PC-9 (cell line): ENCODE measurements at regions of chr5 and their contacts with region 1.

Region 1: DNA sequence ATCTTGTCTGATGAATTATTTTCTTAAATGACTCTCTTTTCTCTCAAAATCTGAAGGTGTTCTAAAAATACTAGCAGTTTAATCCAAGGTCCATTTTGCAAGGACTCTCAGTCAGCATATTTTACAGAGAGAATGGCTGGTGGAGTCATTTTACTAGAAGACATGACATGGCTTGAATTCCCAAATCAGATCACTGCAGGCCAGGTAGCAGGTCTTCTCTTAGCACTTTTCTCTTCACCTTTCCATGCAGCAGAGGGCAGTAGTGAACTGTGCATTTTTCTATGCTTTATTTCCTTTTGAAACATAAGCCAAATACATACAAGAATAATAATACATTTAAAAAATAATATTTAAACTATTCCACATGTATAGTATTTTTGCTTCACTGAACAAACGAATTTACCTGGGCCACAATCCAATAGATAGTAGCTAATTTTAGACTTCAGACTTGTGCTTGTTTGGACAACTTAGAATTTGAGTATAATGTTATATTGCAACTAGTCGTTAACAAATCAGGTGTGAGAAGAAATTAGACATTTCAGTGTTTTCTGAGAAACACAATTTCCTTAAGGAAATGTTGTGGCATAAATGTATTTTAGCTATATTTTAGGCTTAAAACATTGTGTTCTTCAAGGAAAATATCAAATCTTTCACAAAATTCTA is 289.4 kb upstream of the DAB2 start:
- DNase-seq: peak; percentile 63 to 74
- H3K4me3 ChIP-seq: no peak overlapping the region
- H3K27ac ChIP-seq: peak overlapping the region; percentile 60
- H3K4me1 ChIP-seq: peaks cover 8% of the 10 kb centered on the region; the same call in 1 of the 2 replicates
- H3K27me3 ChIP-seq: no peaks in the 10 kb centered on the region
- CTCF ChIP-seq: peak; percentile 87

Region 2: DNA sequence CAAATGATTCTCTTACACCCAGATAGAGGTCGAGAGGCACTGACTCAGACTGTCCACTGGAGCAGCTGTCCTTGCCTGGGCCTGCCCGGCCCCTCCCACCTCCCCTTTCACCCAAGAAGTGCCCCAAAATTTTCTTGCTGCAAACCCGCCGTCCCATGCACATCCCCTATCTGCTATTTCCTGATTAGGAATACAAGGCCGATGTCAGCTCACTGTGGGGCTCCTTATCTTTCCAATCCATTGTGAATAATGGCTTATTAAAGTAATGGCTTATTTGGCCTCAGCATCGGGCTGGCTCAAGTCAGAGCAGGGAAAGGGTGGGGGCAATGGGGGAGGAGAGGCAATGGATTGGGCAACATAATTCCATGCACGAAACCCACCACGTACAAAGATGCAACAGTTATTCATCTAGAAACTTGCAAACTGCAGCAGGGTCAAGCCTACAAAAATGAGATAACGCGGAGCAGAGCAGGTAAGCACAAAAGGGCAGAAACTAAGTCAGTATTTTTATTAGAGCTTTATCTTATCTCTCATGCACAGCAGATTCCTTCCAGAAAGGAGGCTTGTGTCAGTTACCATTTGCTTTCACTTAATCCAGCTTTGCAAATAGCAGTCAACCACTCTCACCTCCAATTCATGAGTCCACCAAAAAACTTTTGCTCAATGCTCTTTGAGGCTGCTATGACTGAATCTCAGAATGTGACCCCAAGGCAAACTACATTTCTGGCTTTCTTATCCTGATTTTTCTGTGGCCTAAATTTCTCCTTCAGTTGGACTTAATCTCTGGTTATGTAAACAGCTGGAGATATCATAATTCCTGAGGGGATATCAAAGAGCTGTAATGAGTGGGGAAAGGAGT is 1006.6 kb before region 1 on chr5:
- CTCF ChIA-PET with region 1: no interaction called
- POLR2A ChIA-PET with region 1: no interaction called
- intact Hi-C with region 1: no loop called
- DNase-seq: no peak
- H3K4me3 ChIP-seq: no peak overlapping the region
- H3K27ac ChIP-seq: no peak overlapping the region
- H3K4me1 ChIP-seq: no peaks in the 10 kb centered on the region
- H3K27me3 ChIP-seq: peaks cover 22% of the 10 kb centered on the region; the same call in 1 of the 2 replicates
- CTCF ChIP-seq: no peak

Region 3: DNA sequence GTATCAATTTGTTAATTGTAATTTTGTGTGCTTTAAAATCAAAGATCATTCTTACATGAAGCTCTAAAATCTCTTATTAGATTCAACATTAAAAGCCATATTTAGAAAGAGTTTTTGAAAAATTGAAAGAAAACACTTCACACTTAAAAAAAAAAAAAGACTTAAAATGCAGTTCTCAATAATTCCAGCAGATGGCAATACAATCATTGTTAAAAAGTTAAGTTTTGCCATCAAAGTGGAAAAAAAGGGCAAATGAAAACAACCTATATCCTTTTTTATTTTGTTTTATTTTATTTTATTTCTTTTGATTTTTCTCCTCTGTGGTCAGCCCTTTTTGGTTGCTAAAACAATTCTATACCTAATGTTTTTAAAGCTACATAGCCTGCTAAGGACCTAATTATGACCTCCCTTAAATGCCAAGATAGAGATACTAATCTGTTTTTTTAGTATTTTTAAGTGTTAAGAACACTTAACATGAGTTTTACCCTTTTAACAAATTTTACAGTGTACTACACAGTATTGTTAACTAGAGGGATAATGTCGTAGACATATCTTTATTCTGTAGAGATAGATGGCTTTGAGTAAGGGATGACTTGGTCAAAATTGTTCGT is 135.2 kb before region 1 on chr5:
- CTCF ChIA-PET with region 1: interaction called, 6 read pairs
- POLR2A ChIA-PET with region 1: no interaction called
- intact Hi-C with region 1: loop called (anchors 1 kb)
- DNase-seq: no peak
- H3K4me3 ChIP-seq: no peak overlapping the region
- H3K27ac ChIP-seq: no peak overlapping the region
- H3K4me1 ChIP-seq: no peaks in the 10 kb centered on the region
- H3K27me3 ChIP-seq: no peaks in the 10 kb centered on the region
- CTCF ChIP-seq: peak; percentile 92

Region 4: DNA sequence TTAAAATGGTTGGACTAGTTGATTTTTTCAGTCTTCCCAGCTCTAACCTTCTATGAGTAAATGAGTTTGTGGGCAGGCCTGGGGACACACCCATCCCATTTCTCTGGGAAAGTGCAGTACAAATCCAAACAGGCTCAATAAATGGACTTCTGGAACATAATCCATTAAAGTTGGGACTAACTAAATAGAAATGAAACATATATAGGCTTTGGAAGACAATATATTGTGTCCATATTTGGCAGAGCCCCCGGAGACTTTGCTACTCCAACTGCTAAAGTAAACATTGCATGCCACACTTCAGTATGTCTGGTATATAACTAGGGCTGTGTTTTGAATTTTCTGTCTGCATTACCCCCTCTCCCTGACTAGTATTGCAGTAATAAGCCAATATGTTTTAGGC is 98.0 kb before region 1 on chr5:
- CTCF ChIA-PET with region 1: no interaction called
- POLR2A ChIA-PET with region 1: no interaction called
- intact Hi-C with region 1: no loop called
- DNase-seq: no peak
- H3K4me3 ChIP-seq: no peak overlapping the region
- H3K27ac ChIP-seq: no peak overlapping the region
- H3K4me1 ChIP-seq: peaks cover 10% of the 10 kb centered on the region
- H3K27me3 ChIP-seq: no peaks in the 10 kb centered on the region
- CTCF ChIP-seq: no peak

Region 5: DNA sequence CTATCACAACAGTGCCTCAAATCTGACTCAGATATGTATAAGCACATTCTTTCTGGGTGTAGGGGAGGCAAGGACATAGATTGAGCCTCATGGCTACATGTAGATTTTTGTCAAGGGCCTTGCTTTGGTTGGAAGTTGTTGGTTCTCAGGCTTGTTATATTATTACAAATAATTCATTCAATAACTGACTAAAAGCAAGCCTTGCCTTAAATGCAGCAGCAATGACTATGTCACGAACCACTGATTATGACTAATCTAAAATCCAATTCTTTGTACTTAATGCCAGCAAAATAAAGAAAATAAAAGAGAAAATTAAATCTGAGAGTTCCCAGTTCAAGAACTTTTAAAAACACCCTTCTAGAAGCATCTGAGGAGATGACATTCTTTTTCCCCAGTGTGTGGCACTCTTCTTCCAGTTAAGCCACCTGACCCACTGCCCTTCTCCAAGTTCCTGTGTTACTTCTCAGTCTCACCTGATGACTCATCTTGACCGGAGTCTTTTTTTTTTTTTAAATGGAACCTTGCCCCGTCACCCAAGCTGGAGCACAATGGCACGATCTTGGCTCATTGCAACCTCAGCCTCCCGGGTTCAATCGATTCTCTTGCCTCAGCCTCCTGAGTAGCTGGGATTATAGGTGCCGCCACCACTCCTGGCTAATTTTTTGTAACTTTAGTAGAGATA is 65.5 kb before region 1 on chr5:
- CTCF ChIA-PET with region 1: no interaction called
- POLR2A ChIA-PET with region 1: no interaction called
- intact Hi-C with region 1: loop called (anchors 2 kb)
- DNase-seq: peak; percentile 61 to 66
- H3K4me3 ChIP-seq: no peak overlapping the region
- H3K27ac ChIP-seq: no peak overlapping the region
- H3K4me1 ChIP-seq: 0 out of 2 replicates have a peak, but pooled peaks cover 4% of the 10 kb centered on the region
- H3K27me3 ChIP-seq: no peaks in the 10 kb centered on the region
- CTCF ChIP-seq: no peak

Region 6: GRCh38 chr5:40089269-40089668 is 375.1 kb after region 1 on chr5:
- CTCF ChIA-PET with region 1: no interaction called
- POLR2A ChIA-PET with region 1: no interaction called
- intact Hi-C with region 1: loop called (anchors 10 kb)
- DNase-seq: peak in 1 of 2 experiments; percentile 20
- H3K4me3 ChIP-seq: no peak overlapping the region
- H3K27ac ChIP-seq: no peak overlapping the region
- H3K4me1 ChIP-seq: no peaks in the 10 kb centered on the region
- H3K27me3 ChIP-seq: no peaks in the 10 kb centered on the region
- CTCF ChIP-seq: no peak

Region 7: DNA sequence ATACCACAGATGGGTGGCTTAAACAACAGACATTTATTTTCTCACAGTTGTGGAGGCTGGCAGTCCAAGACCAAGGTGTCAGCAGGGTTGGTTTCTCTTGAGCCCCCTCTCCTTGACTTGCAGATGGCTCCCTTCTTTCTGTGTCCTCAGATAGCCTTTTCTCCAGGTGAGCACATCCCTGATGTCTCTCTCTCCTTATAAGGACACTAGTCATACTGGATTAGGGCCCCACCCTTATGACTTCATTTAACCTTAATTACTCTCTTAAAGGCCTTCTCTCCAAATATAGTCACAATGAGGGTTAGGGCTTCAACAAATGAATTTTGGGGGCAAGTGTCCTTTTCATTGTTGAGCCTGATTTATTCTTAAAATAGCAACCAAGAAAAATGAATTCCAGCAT is 980.3 kb after region 1 on chr5:
- CTCF ChIA-PET with region 1: interaction called, 8 read pairs
- POLR2A ChIA-PET with region 1: interaction called, 28 read pairs
- intact Hi-C with region 1: no loop called
- DNase-seq: no peak
- H3K4me3 ChIP-seq: no peak overlapping the region
- H3K27ac ChIP-seq: no peak overlapping the region
- H3K4me1 ChIP-seq: peaks cover 8% of the 10 kb centered on the region; the same call in 1 of the 2 replicates
- H3K27me3 ChIP-seq: no peaks in the 10 kb centered on the region
- CTCF ChIP-seq: no peak